Panc1 (cell line): ENCODE measurements at regions of chr20 and their contacts with region 1.

Region 1: DNA sequence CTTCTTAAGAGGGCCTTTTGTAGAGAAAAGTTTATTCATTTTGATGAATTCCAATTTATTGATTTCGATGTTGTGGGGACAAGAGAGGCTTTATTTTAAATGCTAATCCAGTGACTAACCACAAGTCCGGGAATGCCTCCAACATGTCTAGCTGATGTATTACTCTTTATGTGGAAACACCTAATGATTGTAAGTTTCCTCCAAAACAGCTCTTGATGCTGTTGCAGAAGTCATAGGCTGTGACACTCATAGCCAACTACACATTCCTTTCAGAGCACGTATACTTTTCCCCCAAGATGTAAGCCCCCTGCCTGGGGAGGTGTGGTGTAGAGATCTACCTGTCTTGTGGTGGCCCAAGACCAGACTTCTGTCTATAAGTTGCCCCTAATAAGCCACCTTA is 61.3 kb upstream of the RNF24 start:
- DNase-seq: no peak
- ATAC-seq: peak; percentile 78
- H3K4me3 ChIP-seq: no peak overlapping the region
- H3K27ac ChIP-seq: no peak overlapping the region
- H3K4me1 ChIP-seq: peaks cover 9% of the 10 kb centered on the region
- H3K27me3 ChIP-seq: no peaks in the 10 kb centered on the region
- CTCF ChIP-seq: no peak

Region 2: GRCh38 chr20:4025125-4025524 is 51.5 kb before region 1 on chr20:
- CTCF ChIA-PET with region 1: interaction called, 12 read pairs
- POLR2A ChIA-PET with region 1: no interaction called
- in situ Hi-C with region 1: no loop called
- intact Hi-C with region 1: no loop called
- DNase-seq: no peak
- ATAC-seq: no peak
- H3K4me3 ChIP-seq: no peak overlapping the region
- H3K27ac ChIP-seq: no peak overlapping the region
- H3K4me1 ChIP-seq: no peaks in the 10 kb centered on the region
- H3K27me3 ChIP-seq: no peaks in the 10 kb centered on the region; the same call in 1 of the 2 replicates
- CTCF ChIP-seq: no peak

Region 3: GRCh38 chr20:4053071-4053919 is 23.4 kb before region 1 on chr20:
- CTCF ChIA-PET with region 1: no interaction called
- POLR2A ChIA-PET with region 1: no interaction called
- in situ Hi-C with region 1: no loop called
- intact Hi-C with region 1: no loop called
- DNase-seq: no peak
- ATAC-seq: no peak
- H3K4me3 ChIP-seq: no peak overlapping the region
- H3K27ac ChIP-seq: no peak overlapping the region
- H3K4me1 ChIP-seq: no peaks in the 10 kb centered on the region
- H3K27me3 ChIP-seq: no peaks in the 10 kb centered on the region
- CTCF ChIP-seq: no peak

Region 4: DNA sequence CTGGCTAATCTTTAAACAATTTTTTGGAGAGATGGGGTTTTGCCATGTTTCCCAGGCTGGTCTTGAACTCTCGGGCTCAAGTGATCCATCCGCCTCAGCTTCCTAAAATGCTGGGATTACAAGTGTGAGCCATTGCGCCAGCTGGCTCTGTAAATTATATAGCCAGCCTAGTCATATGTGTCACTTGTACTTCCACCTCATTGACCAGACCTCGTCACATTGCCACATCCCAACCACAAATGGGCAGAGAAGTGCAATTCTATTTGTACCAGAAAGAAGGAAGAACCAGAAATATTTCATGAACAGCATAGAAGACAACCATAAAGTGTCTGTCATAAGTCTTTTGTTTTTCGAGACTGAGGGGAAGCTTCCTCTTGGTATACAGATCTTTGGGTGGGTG is 243.6 kb after region 1 on chr20:
- CTCF ChIA-PET with region 1: no interaction called
- POLR2A ChIA-PET with region 1: no interaction called
- in situ Hi-C with region 1: no loop called
- intact Hi-C with region 1: no loop called
- DNase-seq: no peak
- ATAC-seq: no peak
- H3K4me3 ChIP-seq: no peak overlapping the region
- H3K27ac ChIP-seq: no peak overlapping the region
- H3K4me1 ChIP-seq: no peaks in the 10 kb centered on the region
- H3K27me3 ChIP-seq: peaks cover 6% of the 10 kb centered on the region
- CTCF ChIP-seq: no peak